ENCODE measurements at regions of chr7 and their contacts with region 1.

Region 1: GRCh38 chr7:1175967-1176851 is 16.2 kb upstream of the ZFAND2A start:
- DNase-seq: peak; percentile 82
- H3K4me3 Mint-ChIP-seq: peak overlapping the region; percentile 30
- H3K27ac Mint-ChIP-seq: peak overlapping the region; percentile 74
- H3K4me1 Mint-ChIP-seq: peaks cover 17% of the 10 kb centered on the region
- H3K27me3 Mint-ChIP-seq: peaks cover 11% of the 10 kb centered on the region

Region 2: GRCh38 chr7:1187127-1187526 is 10.9 kb after region 1 on chr7:
- CTCF ChIA-PET with region 1: interaction called, 50 read pairs
- POLR2A ChIA-PET with region 1: no interaction called
- DNase-seq: no peak
- H3K4me3 Mint-ChIP-seq: no peak overlapping the region
- H3K27ac Mint-ChIP-seq: no peak overlapping the region
- H3K4me1 Mint-ChIP-seq: peaks cover 15% of the 10 kb centered on the region
- H3K27me3 Mint-ChIP-seq: peaks cover 4% of the 10 kb centered on the region

Region 3: GRCh38 chr7:1193593-1194424 is 17.6 kb after region 1 on chr7:
- CTCF ChIA-PET with region 1: interaction called, 50 read pairs
- POLR2A ChIA-PET with region 1: no interaction called
- DNase-seq: peak; percentile 53
- H3K4me3 Mint-ChIP-seq: no peak overlapping the region
- H3K27ac Mint-ChIP-seq: peak overlapping the region; percentile 25
- H3K4me1 Mint-ChIP-seq: peaks cover 22% of the 10 kb centered on the region
- H3K27me3 Mint-ChIP-seq: peaks cover 4% of the 10 kb centered on the region